HEK293 (cell line): ENCODE measurements at regions of chr16 and their contacts with region 1.

Region 1: GRCh38 chr16:2867987-2868789 is 10.2 kb upstream of the PRSS22 start:
- H3K4me3 ChIP-seq: peak overlapping the region; percentile 68
- H3K27ac ChIP-seq: peak overlapping the region; percentile 67
- H3K4me1 ChIP-seq: no peaks in the 10 kb centered on the region
- CTCF ChIP-seq: peak; percentile 97

Region 2: GRCh38 chr16:2777231-2777902 is 90.8 kb before region 1 on chr16 and contains the start of gene ELOB:
- CTCF ChIA-PET with region 1: interaction called, 11 read pairs
- POLR2A ChIA-PET with region 1: interaction called, 12 read pairs
- H3K4me3 ChIP-seq: peak within 1 kb of the TSS; percentile 92
- H3K27ac ChIP-seq: peak within 1 kb of the TSS; percentile 99
- H3K4me1 ChIP-seq: peaks cover 2% of the 10 kb centered on the region; the same call in 1 of the 2 replicates
- CTCF ChIP-seq: no peak

Region 3: DNA sequence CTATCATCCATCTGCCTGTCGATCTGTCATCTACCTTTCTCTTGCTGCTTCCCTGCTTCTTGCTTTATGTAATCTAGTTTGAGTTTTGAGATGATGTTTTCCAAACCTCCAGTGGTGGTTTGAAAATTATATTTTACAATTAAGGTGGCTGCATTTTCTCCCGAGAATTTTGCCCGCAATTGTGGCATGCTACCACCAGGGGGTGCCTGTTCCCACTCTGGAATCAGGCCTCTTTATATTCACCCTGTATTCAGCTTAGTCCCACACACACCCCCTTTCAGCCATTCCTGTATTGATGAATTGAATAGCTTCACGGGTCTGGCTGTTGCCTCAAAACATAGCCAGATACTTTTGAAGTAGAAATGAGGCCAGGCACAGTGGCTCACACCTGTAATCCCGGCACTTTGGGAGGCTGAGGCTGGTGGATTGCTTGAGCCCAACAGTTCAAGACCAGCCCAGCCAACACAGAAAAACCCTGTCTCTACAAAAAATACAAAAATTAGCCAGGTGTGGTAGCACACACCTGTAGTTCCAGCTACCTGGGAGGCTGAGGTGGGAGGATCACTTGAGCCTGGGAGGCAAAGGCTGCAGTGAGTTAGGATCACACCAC is 13.4 kb before region 1 on chr16:
- CTCF ChIA-PET with region 1: interaction called, 16 read pairs
- POLR2A ChIA-PET with region 1: interaction called, 4 read pairs
- H3K4me3 ChIP-seq: no peak overlapping the region
- H3K27ac ChIP-seq: no peak overlapping the region
- H3K4me1 ChIP-seq: no peaks in the 10 kb centered on the region
- CTCF ChIP-seq: no peak

Region 4: DNA sequence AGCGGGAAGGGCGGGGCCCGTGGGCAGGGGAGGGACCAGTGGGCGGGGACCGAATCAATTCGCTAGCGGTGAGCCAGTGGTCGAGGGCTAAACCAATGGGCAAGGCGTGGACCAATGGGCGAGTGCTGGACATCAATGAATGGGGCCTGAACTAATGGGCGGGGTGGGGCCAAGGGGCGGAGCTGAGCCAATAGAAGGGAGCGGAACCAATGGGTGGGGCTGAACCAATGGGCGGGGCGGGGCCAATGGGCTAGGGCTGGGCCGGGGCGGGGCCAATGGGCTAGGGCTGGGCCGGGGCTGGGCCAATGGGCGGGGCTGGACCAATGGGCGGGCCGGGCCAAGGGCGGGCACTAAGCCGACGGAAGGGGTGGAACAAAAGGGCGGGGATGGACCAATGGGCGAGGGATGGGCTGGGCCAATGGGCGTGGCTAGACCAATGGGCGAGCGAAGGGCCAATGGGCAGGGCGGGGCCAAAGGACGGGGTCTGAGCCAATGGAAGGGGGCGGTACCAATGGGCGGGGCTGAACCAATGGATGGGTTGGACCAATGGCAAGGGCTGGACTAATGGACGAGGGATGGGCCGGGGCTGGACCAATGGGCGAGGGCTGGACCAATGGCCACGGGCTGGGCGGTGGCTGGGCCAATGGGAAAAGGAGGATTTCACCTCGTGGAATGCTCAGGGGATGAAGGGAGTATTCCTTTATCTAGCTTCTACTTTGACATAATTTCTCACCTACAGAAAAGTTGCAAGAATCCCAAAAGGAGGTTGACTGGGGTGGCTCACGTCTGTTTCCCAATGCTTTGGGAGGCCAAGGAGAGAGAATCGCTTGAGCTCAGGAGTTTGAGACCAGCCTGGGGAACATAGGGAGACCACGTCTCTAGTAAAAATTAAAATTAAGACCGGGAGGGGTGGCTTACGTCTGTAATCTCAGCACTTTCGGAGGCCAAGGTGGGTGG is 37.5 kb after region 1 on chr16:
- CTCF ChIA-PET with region 1: interaction called, 11 read pairs
- POLR2A ChIA-PET with region 1: interaction called, 11 read pairs
- H3K4me3 ChIP-seq: peak overlapping the region; percentile 66
- H3K27ac ChIP-seq: no peak overlapping the region
- H3K4me1 ChIP-seq: peaks cover 3% of the 10 kb centered on the region; the same call in 1 of the 2 replicates
- CTCF ChIP-seq: no peak

Region 5: GRCh38 chr16:2926650-2927646 is 58.8 kb after region 1 on chr16:
- CTCF ChIA-PET with region 1: interaction called, 11 read pairs
- POLR2A ChIA-PET with region 1: no interaction called
- H3K4me3 ChIP-seq: no peak overlapping the region
- H3K27ac ChIP-seq: no peak overlapping the region
- H3K4me1 ChIP-seq: no peaks in the 10 kb centered on the region
- CTCF ChIP-seq: peak; percentile 96

Region 6: GRCh38 chr16:3400779-3401688 is 532.8 kb after region 1 on chr16 and contains the starts of genes ZNF174 and ZSCAN32:
- CTCF ChIA-PET with region 1: no interaction called
- POLR2A ChIA-PET with region 1: no interaction called
- H3K4me3 ChIP-seq: peak within 1 kb of the TSS; percentile 95
- H3K27ac ChIP-seq: peak within 1 kb of the TSS; percentile 71; the same call in 1 of the 2 replicates
- H3K4me1 ChIP-seq: no peaks in the 10 kb centered on the region
- CTCF ChIP-seq: peak; percentile 70